ENCODE measurements at regions of chr12 and their contacts with region 1.

Region 1: DNA sequence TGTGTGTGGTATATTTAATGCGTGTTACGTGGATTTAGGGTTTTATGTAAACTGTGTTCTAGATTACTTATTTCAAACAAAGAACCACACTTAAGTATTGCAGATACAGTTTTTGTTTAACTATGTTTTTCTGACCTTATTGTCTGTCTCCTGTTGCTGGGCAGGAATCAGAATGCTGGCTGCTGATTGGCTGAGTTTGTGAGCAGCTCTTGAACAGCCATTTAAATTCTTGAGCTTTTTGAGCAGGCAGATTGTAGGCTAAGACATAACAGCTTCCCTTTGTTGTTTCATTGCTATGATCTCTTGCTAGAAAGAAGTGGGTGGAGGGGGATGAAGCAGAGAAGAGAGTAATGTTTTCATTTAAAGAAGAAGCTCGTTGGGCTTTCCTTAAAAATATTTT is 52.2 kb downstream of the ATF7IP start:
- DNase-seq: peak; percentile 53 to 88 (median 78)
- ATAC-seq: peak; percentile 82 to 86
- H3K4me3 Mint-ChIP-seq: peak overlapping the region; percentile 68 to 92 (median 83)
- H3K27ac Mint-ChIP-seq: peak overlapping the region in 9 of 10 donors; percentile 71 to 96 (median 90)
- H3K4me1 Mint-ChIP-seq: peaks cover 20 to 77% (median 59%) of the 10 kb centered on the region in 4 donors
- H3K27me3 Mint-ChIP-seq: no peaks in the 10 kb centered on the region

Region 2: DNA sequence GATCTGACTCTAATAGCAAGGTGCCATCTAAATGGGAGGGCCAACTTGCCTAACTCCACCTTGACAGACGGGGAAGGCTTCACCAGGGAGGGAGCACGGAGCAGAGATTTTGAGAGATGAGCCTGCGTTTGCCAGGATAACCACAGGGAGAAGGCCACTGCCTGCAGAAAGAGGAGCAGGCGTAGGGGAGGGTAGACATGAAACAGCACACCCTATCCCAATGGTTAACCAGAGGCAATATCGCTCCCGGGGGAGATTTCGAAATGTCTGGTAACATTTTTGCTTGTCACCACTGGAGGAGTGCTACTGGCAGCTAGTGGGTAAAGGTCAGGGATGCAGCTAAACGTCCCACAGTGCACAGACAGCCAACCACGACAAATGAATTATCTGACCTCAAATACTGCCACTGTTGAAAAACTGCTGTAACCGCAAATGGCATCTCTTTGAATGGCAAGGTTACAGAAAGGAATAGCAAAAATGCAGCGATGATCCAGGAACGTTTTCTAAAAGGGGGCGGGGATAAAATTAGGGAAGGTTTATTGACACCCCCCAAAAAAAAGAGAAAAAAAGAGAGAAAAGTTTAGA is 178.3 kb before region 1 on chr12:
- POLR2A ChIA-PET with region 1: interaction called, 18 read pairs
- DNase-seq: peak in 2 of 10 donors; percentile 4 to 9
- ATAC-seq: peak; percentile 43 to 63
- H3K4me3 Mint-ChIP-seq: peak overlapping the region; percentile 64 to 87 (median 80)
- H3K27ac Mint-ChIP-seq: peak overlapping the region in 9 of 10 donors; percentile 15 to 97 (median 73)
- H3K4me1 Mint-ChIP-seq: peaks cover 8 to 30% (median 17%) of the 10 kb centered on the region in 4 donors
- H3K27me3 Mint-ChIP-seq: no peaks in the 10 kb centered on the region